ENCODE measurements at regions of chr1 and their contacts with region 1.

Region 1: DNA sequence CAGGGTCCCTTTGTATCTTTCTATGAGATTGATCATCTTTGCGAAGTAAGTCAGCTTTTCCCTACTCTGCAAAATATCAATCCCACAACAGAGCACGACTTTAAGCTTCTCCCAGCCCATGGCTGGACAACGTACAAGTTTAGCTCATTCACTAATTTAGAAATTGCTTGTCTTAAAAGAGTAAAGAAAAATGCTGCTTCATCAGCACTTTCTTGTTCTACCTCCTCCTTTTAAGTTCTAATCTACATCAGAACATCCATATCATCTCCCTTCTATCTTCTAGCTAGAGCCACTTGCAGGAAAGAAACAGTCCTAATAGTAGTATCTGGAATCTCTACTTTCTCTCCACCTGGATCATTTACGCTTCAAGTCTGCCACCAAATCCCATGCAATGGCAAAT is 441.2 kb upstream of the ESRRG start:
- DNase-seq: no peak
- H3K4me3 ChIP-seq: no peak overlapping the region
- H3K27ac ChIP-seq: no peak overlapping the region
- H3K4me1 ChIP-seq: no peaks in the 10 kb centered on the region
- H3K27me3 ChIP-seq: no peaks in the 10 kb centered on the region
- CTCF ChIP-seq: no peak

Region 2: DNA sequence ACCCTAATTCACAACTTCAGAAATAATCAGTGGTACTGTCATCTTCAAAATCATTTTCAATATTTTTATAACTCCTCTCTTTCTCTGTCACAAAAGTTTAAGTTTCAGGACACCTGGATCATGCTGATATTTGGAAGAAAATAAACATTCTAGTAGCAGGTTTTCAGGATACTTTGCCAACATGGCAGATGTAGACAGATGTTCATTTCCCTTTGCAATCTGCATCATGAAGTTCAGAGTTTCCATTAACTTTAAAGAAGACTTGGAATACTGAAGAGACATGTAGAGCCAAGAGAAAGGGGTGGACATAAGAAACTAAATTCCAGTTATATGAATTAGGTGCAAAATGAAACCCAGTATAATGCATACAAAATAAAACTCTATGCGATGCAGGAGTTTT is 959.2 kb before region 1 on chr1:
- intact Hi-C with region 1: loop called (anchors 5 kb)
- DNase-seq: no peak
- H3K4me3 ChIP-seq: no peak overlapping the region
- H3K27ac ChIP-seq: no peak overlapping the region
- H3K4me1 ChIP-seq: no peaks in the 10 kb centered on the region
- H3K27me3 ChIP-seq: no peaks in the 10 kb centered on the region
- CTCF ChIP-seq: no peak

Measured in tibial artery (tissue), 4 donors.